Activated CD8-positive, alpha-beta memory T cell treated with anti-CD3 and anti-CD28 coated beads, Interleukin-2, amount 10 ng/mL, durations not matched to agents 7 days and 5 days (primary cell): ENCODE measurements at regions of chr17 and their contacts with region 1.

Region 1: GRCh38 chr17:42067351-42068091 is 17.1 kb upstream of the C17orf113 start:
- DNase-seq: peak; percentile 80
- ATAC-seq: peak; percentile 58
- H3K4me3 Mint-ChIP-seq: no peak overlapping the region
- H3K27ac Mint-ChIP-seq: no peak overlapping the region
- H3K4me1 Mint-ChIP-seq: peaks cover 29% of the 10 kb centered on the region
- H3K27me3 Mint-ChIP-seq: peaks cover 11% of the 10 kb centered on the region

Region 2: GRCh38 chr17:41972571-41973411 is 94.7 kb before region 1 on chr17:
- CTCF ChIA-PET with region 1: no interaction called
- DNase-seq: no peak
- ATAC-seq: no peak
- H3K4me3 Mint-ChIP-seq: no peak overlapping the region
- H3K27ac Mint-ChIP-seq: no peak overlapping the region
- H3K4me1 Mint-ChIP-seq: peaks cover 22% of the 10 kb centered on the region
- H3K27me3 Mint-ChIP-seq: no peaks in the 10 kb centered on the region

Region 3: DNA sequence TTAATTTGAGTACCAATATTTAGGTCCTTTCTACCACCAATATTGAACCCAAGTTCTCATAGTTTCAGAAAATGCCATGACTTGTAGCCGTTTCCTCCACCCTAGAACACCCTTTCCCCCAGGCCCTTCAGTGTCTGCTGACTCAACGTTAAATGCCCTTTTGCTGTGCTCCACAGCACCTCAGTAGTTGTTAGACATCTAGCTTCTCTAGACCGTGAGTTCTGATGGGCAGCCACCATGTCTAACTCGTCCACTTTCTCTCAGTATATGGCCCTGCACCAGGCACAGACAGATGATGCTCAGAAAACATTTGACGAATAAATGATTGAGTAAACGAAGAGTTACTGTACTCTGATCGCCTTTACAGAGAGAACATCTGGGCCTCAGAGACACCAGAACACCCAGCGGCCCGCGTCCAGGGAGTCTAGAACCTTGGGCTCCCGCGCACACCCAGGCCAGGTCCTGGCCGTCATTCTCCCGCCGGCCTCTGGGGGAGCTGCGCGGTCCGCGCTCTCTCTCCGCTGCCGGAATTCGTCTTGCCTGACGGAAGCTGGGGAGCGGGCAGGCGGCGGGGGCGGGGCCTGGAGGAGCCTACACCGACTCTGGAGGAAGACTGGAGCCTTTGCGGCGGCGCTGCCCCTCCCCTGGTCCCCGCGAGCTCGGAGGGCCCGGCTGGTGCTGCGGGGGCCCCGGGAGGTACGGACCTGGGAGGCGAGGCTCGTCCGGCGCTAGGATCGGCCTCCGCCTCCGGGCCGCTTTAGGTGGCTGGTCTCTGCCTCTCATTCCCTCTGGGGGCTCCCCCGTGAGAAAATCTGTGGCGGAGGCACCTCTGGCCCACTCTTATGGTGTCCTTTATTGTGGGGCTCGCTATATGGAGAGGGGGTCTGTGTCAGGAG is 47.8 kb before region 1 on chr17 and contains the start of gene NKIRAS2:
- CTCF ChIA-PET with region 1: interaction called, 10 read pairs
- DNase-seq: peak; percentile 95
- ATAC-seq: peak; percentile 78
- H3K4me3 Mint-ChIP-seq: peak within 1 kb of the TSS; percentile 93
- H3K27ac Mint-ChIP-seq: peak within 1 kb of the TSS; percentile 77
- H3K4me1 Mint-ChIP-seq: peaks cover 57% of the 10 kb centered on the region
- H3K27me3 Mint-ChIP-seq: no peaks in the 10 kb centered on the region
- total RNA-seq, gene NKIRAS2: 21.0 to 23.7 TPM

Region 4: DNA sequence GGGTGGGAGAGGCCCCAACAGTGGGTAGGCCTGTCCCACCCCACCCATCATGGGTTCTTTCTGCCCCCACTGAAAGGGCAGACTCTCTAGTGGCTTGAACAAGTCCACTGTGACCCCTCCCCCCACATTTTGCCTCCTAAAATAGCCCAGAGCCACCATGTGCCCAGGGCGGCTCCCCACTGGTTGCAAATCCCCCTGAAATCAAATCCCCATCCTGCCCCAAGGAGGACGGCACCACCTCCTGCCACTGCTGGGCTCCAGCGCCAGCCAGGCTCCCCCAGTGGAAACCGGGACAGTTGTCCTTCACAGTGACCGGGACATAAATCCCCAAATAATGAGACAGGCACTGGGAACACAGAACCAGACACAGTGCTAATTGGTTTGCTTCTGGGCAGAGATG is 10.2 kb after region 1 on chr17:
- CTCF ChIA-PET with region 1: interaction called, 17 read pairs
- DNase-seq: no peak
- ATAC-seq: no peak
- H3K4me3 Mint-ChIP-seq: no peak overlapping the region
- H3K27ac Mint-ChIP-seq: no peak overlapping the region
- H3K4me1 Mint-ChIP-seq: peaks cover 1% of the 10 kb centered on the region
- H3K27me3 Mint-ChIP-seq: peaks cover 16% of the 10 kb centered on the region

Region 5: DNA sequence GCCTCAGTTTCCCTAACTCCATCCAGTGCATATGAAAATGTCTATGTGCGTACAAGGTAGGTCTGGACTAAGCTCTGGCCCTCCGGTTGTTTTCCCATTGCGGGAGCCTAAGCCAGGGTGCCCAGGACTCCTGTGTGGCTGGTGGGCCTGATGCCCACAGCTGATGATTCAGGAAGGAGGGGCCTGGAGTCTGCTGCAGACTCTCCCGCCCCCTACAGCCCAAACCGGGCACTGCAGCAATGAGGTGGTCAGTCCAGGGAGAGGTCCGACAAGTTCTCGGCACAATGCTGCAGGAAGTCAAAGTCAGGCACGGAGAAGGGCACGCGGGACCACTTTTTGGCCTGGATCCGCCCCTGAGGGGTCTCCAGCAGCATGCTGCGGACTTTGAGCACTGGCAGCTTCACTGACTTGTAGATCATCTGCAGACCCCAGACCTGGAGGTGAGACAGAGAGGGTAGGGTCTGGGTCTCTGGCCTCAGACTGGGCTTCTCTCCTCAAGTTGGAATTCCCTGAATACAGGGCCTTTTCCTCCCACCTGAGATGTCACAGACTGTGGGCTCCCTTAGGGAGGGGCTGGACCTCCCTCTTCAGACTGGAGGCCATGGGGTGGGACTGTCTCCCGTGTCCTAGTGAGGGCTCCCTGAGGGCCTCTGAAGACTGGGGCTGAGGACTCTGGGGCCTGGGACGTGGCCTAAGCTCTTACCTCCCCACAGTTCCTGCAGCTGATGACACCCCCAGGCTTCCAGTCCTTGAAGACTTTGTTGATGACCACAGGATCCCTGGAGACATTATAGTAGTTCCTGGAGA is 34.2 kb after region 1 on chr17:
- CTCF ChIA-PET with region 1: interaction called, 117 read pairs
- DNase-seq: peak; percentile 80
- ATAC-seq: peak; percentile 64
- H3K4me3 Mint-ChIP-seq: no peak overlapping the region
- H3K27ac Mint-ChIP-seq: no peak overlapping the region
- H3K4me1 Mint-ChIP-seq: peaks cover 8% of the 10 kb centered on the region
- H3K27me3 Mint-ChIP-seq: peaks cover 15% of the 10 kb centered on the region

Region 6: DNA sequence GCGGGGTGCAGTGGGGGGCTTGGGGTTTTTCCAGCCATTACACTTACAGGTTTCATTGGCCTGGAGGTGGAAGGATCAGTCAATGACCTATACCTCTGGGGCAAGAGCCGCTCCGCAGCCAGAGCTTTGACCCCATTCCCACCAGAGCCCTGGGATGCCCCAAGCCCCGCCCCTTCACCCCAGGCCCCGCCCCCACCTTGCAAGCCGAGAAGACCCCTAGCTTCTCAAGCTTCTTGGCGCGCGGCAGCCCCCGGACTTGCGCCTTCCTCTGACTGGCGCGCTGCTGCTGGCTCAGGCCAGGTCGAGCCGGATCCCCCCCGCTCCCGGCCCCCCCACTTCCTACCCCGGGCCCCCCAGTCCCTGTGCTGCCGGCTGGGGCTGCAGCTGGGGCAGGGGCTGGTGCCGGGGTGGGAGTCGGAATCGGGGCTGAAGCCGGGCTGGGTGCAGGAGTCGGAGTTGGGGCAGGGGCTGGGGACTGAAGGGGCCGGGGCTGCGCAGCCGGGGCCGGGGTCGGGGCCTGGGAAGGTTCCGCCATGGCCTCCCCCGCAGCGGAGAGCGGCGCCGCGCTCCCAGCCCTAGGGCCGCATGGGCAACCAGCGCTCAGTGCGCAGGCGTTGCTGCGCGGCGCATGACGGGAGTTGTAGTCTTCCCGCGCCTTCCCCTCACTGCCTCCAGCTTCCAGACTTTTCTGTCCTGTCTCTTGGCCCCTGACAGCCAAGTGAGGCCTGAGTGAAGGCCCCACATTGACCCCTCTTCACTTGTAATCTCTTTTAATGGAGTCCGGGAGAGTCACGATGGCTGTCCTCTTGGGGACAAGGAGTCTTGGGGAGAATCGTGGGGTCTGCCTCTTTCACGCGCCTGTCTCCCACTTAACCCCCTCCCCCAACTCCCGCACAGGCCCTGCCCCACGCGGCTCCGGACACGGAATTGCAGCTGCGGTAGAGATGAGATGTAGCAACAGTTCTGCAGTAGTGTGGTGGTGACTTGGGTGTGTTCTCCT is 53.5 kb after region 1 on chr17 and contains the start of gene KAT2A:
- CTCF ChIA-PET with region 1: interaction called, 117 read pairs
- DNase-seq: peak; percentile 84
- ATAC-seq: peak; percentile 93
- H3K4me3 Mint-ChIP-seq: peak within 1 kb of the TSS; percentile 67
- H3K27ac Mint-ChIP-seq: peak within 1 kb of the TSS; percentile 69
- H3K4me1 Mint-ChIP-seq: peaks cover 34% of the 10 kb centered on the region
- H3K27me3 Mint-ChIP-seq: no peaks in the 10 kb centered on the region
- total RNA-seq, gene KAT2A: 49.0 to 58.2 TPM

Region 7: GRCh38 chr17:42153919-42154742 is 86.6 kb after region 1 on chr17:
- CTCF ChIA-PET with region 1: no interaction called
- DNase-seq: no peak
- ATAC-seq: no peak
- H3K4me3 Mint-ChIP-seq: peak overlapping the region; percentile 85
- H3K27ac Mint-ChIP-seq: peak overlapping the region; percentile 77
- H3K4me1 Mint-ChIP-seq: peaks cover 42% of the 10 kb centered on the region
- H3K27me3 Mint-ChIP-seq: no peaks in the 10 kb centered on the region